Endothelial cell of umbilical vein (primary cell): ENCODE measurements at regions of chr11 and their contacts with region 1.

Region 1: GRCh38 chr11:122863704-122864326 is 18.7 kb upstream of the JHY start:
- DNase-seq: peak; percentile 56
- H3K4me3 ChIP-seq: no peak overlapping the region
- H3K27ac ChIP-seq: no peak overlapping the region
- H3K4me1 ChIP-seq: no peaks in the 10 kb centered on the region
- H3K27me3 ChIP-seq: peaks cover 11 to 18% of the 10 kb centered on the region in 2 experiments
- CTCF ChIP-seq: peak; percentile 66 to 76
- POLR2A ChIP-seq: no peak

Region 2: GRCh38 chr11:122814401-122814800 is 49.4 kb before region 1 on chr11:
- CTCF ChIA-PET with region 1: interaction called, 11 read pairs
- POLR2A ChIA-PET with region 1: no interaction called
- dilution Hi-C with region 1: no loop called
- intact Hi-C with region 1: no loop called
- DNase-seq: no peak
- H3K4me3 ChIP-seq: no peak overlapping the region
- H3K27ac ChIP-seq: no peak overlapping the region
- H3K4me1 ChIP-seq: peaks cover 6% of the 10 kb centered on the region
- H3K27me3 ChIP-seq: no peaks in the 10 kb centered on the region
- CTCF ChIP-seq: no peak
- POLR2A ChIP-seq: no peak

Region 3: GRCh38 chr11:122882857-122883645 is 19.2 kb after region 1 on chr11:
- CTCF ChIA-PET with region 1: interaction called, 39 read pairs
- POLR2A ChIA-PET with region 1: no interaction called
- dilution Hi-C with region 1: no loop called
- intact Hi-C with region 1: no loop called
- DNase-seq: peak; percentile 50
- H3K4me3 ChIP-seq: peak overlapping the region; percentile 58 to 72 (median 71)
- H3K27ac ChIP-seq: peak overlapping the region; percentile 66
- H3K4me1 ChIP-seq: peaks cover 8% of the 10 kb centered on the region
- H3K27me3 ChIP-seq: peaks cover 2 to 4% of the 10 kb centered on the region in 2 experiments
- CTCF ChIP-seq: no peak
- POLR2A ChIP-seq: peak; percentile 53

Region 4: DNA sequence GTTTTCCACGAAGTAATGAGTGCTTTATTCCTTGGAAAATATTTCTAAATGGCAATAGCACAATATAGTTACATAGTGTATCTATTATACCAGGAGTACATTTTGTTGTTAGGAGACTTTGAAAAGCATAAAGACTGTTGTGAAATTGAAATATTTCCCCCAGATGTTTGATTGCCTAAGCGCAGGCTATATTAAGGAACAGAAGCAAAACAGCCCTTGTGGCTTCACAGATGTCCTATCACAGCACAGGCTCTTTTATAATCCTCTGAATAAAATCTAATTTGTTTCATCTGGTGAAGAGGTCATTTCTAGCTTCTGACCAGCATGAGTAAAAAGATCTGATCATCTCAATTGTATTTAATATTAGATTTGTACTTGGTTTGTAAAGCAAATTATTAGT is 69.6 kb after region 1 on chr11:
- CTCF ChIA-PET with region 1: interaction called, 10 read pairs
- POLR2A ChIA-PET with region 1: no interaction called
- dilution Hi-C with region 1: no loop called
- intact Hi-C with region 1: no loop called
- DNase-seq: no peak
- H3K4me3 ChIP-seq: no peak overlapping the region
- H3K27ac ChIP-seq: no peak overlapping the region
- H3K4me1 ChIP-seq: no peaks in the 10 kb centered on the region
- H3K27me3 ChIP-seq: no peaks in the 10 kb centered on the region
- CTCF ChIP-seq: no peak
- POLR2A ChIP-seq: no peak

Region 5: DNA sequence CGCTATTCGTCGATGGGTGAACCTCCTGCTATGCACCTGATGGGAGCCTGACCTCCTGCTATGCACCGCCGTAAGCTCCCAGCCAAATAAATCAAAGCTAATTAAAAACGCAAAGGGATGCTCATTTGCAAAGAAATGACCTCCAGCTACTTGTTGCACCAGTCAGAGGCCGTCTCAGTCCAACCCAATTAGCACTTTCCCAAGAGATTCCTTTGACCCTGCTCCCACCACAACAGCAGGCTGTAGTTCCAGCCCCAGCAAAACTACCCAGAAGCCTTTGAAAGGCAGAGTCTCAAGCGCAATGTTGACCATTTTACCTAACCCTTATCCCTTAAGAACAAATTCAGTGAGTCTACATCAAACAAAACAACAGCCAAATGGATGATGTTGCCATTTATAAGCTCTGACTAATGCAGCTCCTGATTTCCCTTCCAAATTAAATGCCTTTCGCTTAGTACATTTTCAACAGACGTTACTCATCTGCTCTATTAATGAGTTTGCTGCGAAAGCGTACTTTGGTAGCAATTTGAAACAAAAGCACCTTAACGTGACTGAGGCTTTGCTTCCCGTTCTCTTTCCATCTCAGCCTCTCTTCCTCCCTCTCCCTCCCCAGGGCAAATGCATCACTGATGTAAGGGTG is 135.0 kb after region 1 on chr11:
- CTCF ChIA-PET with region 1: interaction called, 11 read pairs
- POLR2A ChIA-PET with region 1: no interaction called
- dilution Hi-C with region 1: no loop called
- intact Hi-C with region 1: no loop called
- DNase-seq: no peak
- H3K4me3 ChIP-seq: no peak overlapping the region
- H3K27ac ChIP-seq: no peak overlapping the region
- H3K4me1 ChIP-seq: no peaks in the 10 kb centered on the region
- H3K27me3 ChIP-seq: peaks cover 5 to 7% of the 10 kb centered on the region in 2 experiments
- CTCF ChIP-seq: no peak
- POLR2A ChIP-seq: no peak

Region 6: GRCh38 chr11:123033895-123034294 is 170.1 kb after region 1 on chr11:
- CTCF ChIA-PET with region 1: interaction called, 18 read pairs
- POLR2A ChIA-PET with region 1: interaction called, 4 read pairs
- dilution Hi-C with region 1: loop called (anchors 10 kb)
- intact Hi-C with region 1: no loop called
- DNase-seq: peak; percentile 32
- H3K4me3 ChIP-seq: no peak overlapping the region
- H3K27ac ChIP-seq: no peak overlapping the region
- H3K4me1 ChIP-seq: no peaks in the 10 kb centered on the region
- H3K27me3 ChIP-seq: peaks cover 0 to 3% of the 10 kb centered on the region in 2 experiments
- CTCF ChIP-seq: peak; percentile 13 to 36
- POLR2A ChIP-seq: no peak

Region 7: DNA sequence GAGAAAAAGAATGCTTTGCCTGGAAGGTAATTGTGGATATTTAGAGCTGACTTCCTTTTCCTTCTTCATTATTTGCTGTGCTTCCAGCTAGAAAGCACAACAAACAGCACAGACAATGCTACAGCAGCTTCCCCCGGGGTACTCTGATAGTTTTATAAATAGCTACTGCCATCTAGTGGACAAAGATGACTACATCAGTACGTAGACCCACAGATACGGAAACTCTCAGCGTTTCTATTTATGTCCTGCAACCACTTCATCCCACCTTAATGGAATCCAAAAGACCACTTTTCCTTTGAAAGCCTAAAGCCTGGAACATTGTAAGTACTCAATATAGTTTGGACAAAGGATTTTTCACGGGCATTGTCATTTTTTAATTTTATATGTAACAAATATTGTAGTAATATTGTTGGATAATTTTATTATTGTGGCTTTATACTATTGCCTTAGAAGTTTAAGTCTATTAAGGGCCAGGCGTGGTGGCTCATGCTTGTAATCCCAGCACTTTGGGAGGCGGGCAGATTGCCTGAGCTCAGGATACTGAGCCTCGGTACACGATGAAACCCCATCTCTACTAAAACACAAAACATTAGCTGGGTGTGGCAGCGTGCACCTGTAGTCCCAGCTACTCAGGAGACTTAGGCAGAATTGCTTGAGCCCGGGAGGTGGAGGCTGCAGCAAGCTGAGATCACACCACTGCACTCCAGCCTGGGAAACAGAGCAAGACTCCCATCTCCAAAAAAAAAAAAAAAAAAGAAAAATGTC is 190.7 kb after region 1 on chr11:
- CTCF ChIA-PET with region 1: interaction called, 101 read pairs
- POLR2A ChIA-PET with region 1: no interaction called
- dilution Hi-C with region 1: no loop called
- intact Hi-C with region 1: loop called (anchors 1 kb)
- DNase-seq: peak; percentile 68
- H3K4me3 ChIP-seq: no peak overlapping the region
- H3K27ac ChIP-seq: no peak overlapping the region
- H3K4me1 ChIP-seq: peaks cover 13% of the 10 kb centered on the region
- H3K27me3 ChIP-seq: no peaks in the 10 kb centered on the region
- CTCF ChIP-seq: peak; percentile 62 to 65
- POLR2A ChIP-seq: peak; percentile 50